A549 (cell line): ENCODE measurements at regions of chr2 and their contacts with region 1.

Region 1: GRCh38 chr2:61898810-61899209 is 6.7 kb upstream of the COMMD1 start:
- DNase-seq: peak in 1 of 2 experiments; percentile 46
- ATAC-seq: peak; percentile 83 to 89
- H3K4me3 ChIP-seq: no peak overlapping the region
- H3K27ac ChIP-seq: no peak overlapping the region
- H3K4me1 ChIP-seq: no peaks in the 10 kb centered on the region
- CTCF ChIP-seq: peak; percentile 77
- EP300 ChIP-seq: no peak
- POLR2A ChIP-seq: no peak
- RAD21 ChIP-seq: peak; percentile 78 to 81

Region 2: DNA sequence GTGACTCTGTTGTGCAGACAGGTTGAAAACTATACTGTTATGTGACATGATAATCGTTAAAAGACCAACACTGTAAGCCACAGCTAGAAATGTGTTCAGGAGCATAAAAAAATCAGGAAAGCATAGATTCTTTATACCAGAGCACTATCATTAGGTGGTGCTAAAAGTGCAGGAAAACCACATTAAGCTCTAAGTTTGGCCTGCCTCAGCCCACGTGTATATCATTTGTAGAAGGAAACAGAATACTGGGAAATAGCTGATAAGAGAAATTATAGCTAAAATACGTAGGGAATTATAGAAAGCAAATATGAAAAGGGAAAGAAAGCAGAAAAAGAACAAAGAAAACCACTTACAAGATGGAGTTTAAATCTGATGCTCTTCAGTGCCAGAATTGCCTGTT is 763.3 kb before region 1 on chr2:
- CTCF ChIA-PET with region 1: interaction called, 11 read pairs
- POLR2A ChIA-PET with region 1: no interaction called
- DNase-seq: peak in 1 of 2 experiments; percentile 61
- ATAC-seq: peak; percentile 85 to 88
- H3K4me3 ChIP-seq: no peak overlapping the region
- H3K27ac ChIP-seq: no peak overlapping the region
- H3K4me1 ChIP-seq: no peaks in the 10 kb centered on the region
- CTCF ChIP-seq: peak; percentile 69
- EP300 ChIP-seq: no peak
- POLR2A ChIP-seq: no peak
- RAD21 ChIP-seq: peak; percentile 77 to 79

Region 3: GRCh38 chr2:61876400-61876799 is 22.4 kb before region 1 on chr2:
- CTCF ChIA-PET with region 1: interaction called, 13 read pairs
- POLR2A ChIA-PET with region 1: no interaction called
- DNase-seq: no peak
- ATAC-seq: no peak
- H3K4me3 ChIP-seq: no peak overlapping the region
- H3K27ac ChIP-seq: peak overlapping the region; percentile 2 to 65; a peak in 2 of 6 replicates
- H3K4me1 ChIP-seq: peaks cover 41% of the 10 kb centered on the region
- CTCF ChIP-seq: no peak
- EP300 ChIP-seq: no peak
- POLR2A ChIP-seq: no peak
- RAD21 ChIP-seq: no peak

Region 4: DNA sequence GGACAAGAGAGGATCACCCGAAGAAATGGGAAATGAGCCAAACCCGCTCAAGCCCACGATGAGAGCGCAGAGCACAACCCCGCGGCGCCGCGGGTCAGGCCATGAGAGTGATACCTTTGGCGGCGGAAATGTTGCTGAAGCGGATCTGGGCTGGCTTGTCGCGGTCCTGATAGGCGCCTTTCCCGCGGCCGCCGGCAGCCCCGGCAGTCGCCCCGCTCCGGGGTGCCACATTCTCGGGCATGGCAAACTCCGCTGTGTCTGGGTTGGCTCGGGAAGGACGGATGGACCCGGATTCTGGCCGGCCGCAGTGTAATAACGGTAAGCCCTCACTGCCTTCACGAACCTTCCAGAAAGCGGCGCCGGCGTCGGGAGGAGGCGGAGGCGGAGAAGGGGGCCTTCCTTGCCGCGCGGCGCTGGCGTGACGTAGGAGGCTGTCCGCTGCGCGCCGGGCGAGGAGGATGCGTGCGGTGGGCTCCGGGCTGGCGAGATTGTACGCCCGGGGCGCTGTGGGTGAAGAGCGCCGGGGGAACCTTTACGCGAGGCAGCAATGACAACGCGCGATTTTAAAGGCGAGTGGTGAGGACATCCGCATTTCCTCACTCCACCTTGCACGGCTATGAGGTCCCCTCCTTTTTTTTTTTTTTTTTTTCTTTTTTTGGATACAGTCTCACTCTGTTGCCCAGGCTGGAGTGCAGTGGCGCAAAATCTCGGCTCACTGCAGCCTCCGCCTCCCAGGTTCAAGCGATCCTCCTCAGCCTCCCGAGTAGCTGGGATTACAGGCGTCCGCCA is 10.3 kb before region 1 on chr2 and contains the start of gene CCT4:
- CTCF ChIA-PET with region 1: interaction called, 10 read pairs
- POLR2A ChIA-PET with region 1: no interaction called
- DNase-seq: peak; percentile 77 to 93
- ATAC-seq: peak; percentile 85 to 92
- H3K4me3 ChIP-seq: peak within 1 kb of the TSS; percentile 88
- H3K27ac ChIP-seq: peak within 1 kb of the TSS; percentile 89 to 93
- H3K4me1 ChIP-seq: peaks cover 27% of the 10 kb centered on the region
- CTCF ChIP-seq: no peak
- EP300 ChIP-seq: no peak
- POLR2A ChIP-seq: peak; percentile 90
- RAD21 ChIP-seq: no peak
- polyA plus RNA-seq, gene CCT4: 307 and 352 TPM in 2 replicates

Region 5: GRCh38 chr2:61910603-61911002 is 11.8 kb after region 1 on chr2:
- CTCF ChIA-PET with region 1: interaction called, 12 read pairs
- POLR2A ChIA-PET with region 1: no interaction called
- DNase-seq: no peak
- ATAC-seq: peak in 1 of 2 experiments; percentile 24; a peak in 2 of 6 replicates
- H3K4me3 ChIP-seq: no peak overlapping the region
- H3K27ac ChIP-seq: no peak overlapping the region
- H3K4me1 ChIP-seq: peaks cover 9% of the 10 kb centered on the region; the same call in 2 of the 3 replicates
- CTCF ChIP-seq: peak; percentile 61
- EP300 ChIP-seq: no peak
- POLR2A ChIP-seq: no peak
- RAD21 ChIP-seq: peak; percentile 35 to 36; a peak in 3 of 5 replicates